ENCODE measurements at regions of chr15 and their contacts with region 1.

Region 1: GRCh38 chr15:43105778-43106485 is at the start of gene UBR1:
- DNase-seq: peak; percentile 87
- ATAC-seq: peak; percentile 85
- H3K4me3 Mint-ChIP-seq: peak within 1 kb of the TSS; percentile 94
- H3K27ac Mint-ChIP-seq: peak within 1 kb of the TSS; percentile 97
- H3K4me1 Mint-ChIP-seq: peaks cover 36% of the 10 kb centered on the region
- H3K27me3 Mint-ChIP-seq: no peaks in the 10 kb centered on the region
- total RNA-seq, gene UBR1: 39.4 to 43.1 TPM

Region 2: GRCh38 chr15:43121863-43122262 is 15.9 kb after region 1 on chr15:
- POLR2A ChIA-PET with region 1: interaction called, 10 read pairs
- DNase-seq: no peak
- ATAC-seq: no peak
- H3K4me3 Mint-ChIP-seq: no peak overlapping the region
- H3K27ac Mint-ChIP-seq: no peak overlapping the region
- H3K4me1 Mint-ChIP-seq: peaks cover 19% of the 10 kb centered on the region
- H3K27me3 Mint-ChIP-seq: peaks cover 23% of the 10 kb centered on the region

Region 3: DNA sequence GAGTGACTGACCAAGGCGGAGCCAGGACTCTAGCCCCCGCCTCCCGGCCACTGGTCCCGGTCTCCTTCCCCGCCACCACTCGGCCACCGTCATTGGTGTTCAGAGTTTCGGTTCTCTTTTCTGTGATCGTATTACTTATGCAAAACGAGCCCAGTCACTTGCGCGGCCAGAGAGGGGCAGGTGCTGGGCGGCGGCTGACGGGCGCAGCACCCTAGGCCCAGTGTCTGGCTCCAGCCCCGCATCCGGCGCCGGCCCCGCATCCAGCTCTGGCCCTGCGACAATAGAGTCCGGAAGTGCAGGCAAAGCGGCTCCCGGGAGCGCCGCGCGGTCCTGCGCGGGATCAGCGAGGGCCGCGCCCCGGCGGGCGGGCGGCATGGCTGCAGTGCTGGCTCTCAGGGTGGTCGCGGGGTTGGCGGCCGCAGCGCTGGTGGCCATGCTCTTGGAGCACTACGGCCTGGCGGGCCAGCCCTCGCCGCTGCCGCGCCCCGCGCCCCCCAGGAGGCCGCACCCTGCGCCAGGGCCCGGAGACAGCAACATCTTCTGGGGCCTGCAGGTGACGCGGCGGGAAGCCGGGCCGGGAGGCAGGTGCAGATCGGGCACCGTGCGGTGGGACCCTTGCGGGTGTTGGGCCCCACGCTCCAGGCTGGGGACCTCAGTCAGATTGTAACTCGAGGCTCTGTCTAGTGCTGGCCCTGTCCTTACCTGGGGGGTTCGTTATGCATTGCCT is 27.7 kb after region 1 on chr15 and contains the start of gene TMEM62:
- POLR2A ChIA-PET with region 1: interaction called, 15 read pairs
- DNase-seq: peak; percentile 75
- ATAC-seq: peak; percentile 88
- H3K4me3 Mint-ChIP-seq: peak within 1 kb of the TSS; percentile 96
- H3K27ac Mint-ChIP-seq: peak within 1 kb of the TSS; percentile 97
- H3K4me1 Mint-ChIP-seq: peaks cover 24% of the 10 kb centered on the region
- H3K27me3 Mint-ChIP-seq: peaks cover 13% of the 10 kb centered on the region
- total RNA-seq, gene TMEM62: 23.3 to 28.1 TPM